IMR-90 (cell line): ENCODE measurements at regions of chr16 and their contacts with region 1.

Region 1: DNA sequence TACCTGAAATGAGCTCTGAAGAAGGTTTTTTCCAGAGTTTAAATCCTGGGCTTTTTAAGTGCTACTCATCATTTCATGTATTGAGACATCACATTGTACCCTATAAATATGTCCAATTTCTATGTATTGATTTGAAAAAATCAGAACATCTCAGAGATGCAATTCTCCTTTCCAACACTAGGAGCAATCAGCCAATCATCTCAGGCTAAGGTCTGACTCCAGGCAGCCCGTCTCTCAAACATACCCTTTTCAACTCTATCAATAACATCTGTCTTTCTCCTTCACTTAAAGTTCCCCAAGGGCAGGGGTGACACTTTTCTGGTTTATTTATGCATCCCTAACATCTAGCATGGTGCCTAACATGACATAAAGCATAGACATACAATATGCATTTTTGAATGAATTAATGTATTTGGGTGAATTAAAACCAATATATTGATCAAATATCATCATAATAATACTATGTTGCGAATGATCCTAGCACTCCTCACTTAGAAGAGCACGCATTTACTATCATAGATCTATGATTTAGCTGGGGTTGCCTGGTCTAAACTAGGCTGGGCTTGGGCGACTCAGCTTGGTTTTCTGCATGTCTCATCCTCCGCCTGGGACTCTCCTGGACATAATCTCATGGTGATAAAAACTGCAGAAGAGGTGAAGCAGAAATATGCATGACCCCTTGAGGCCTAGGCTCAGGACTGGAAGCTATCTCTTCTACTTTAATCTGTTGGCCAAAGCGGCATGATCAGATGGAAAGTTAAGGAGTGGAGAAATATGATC is 5.2 kb upstream of the CDH11 start:
- DNase-seq: no peak
- ATAC-seq: no peak
- H3K4me3 ChIP-seq: no peak overlapping the region
- H3K27ac ChIP-seq: no peak overlapping the region
- H3K4me1 ChIP-seq: peaks cover 8% of the 10 kb centered on the region
- H3K27me3 ChIP-seq: no peaks in the 10 kb centered on the region
- CTCF ChIP-seq: peak; percentile 11; the same call in 1 of the 2 replicates
- POLR2A ChIP-seq: no peak
- RAD21 ChIP-seq: no peak

Region 2: GRCh38 chr16:65054457-65054856 is 72.6 kb before region 1 on chr16:
- CTCF ChIA-PET with region 1: no interaction called
- POLR2A ChIA-PET with region 1: no interaction called
- dilution Hi-C with region 1: no loop called
- in situ Hi-C with region 1: no loop called
- intact Hi-C with region 1: no loop called
- DNase-seq: peak; percentile 31
- ATAC-seq: peak; percentile 64
- H3K4me3 ChIP-seq: no peak overlapping the region
- H3K27ac ChIP-seq: no peak overlapping the region
- H3K4me1 ChIP-seq: peaks cover 13% of the 10 kb centered on the region
- H3K27me3 ChIP-seq: no peaks in the 10 kb centered on the region
- CTCF ChIP-seq: no peak
- POLR2A ChIP-seq: no peak
- RAD21 ChIP-seq: no peak

Region 3: GRCh38 chr16:65116818-65117430 is 10.1 kb before region 1 on chr16:
- CTCF ChIA-PET with region 1: no interaction called
- POLR2A ChIA-PET with region 1: no interaction called
- dilution Hi-C with region 1: no loop called
- in situ Hi-C with region 1: no loop called
- intact Hi-C with region 1: no loop called
- DNase-seq: peak; percentile 41
- ATAC-seq: no peak
- H3K4me3 ChIP-seq: no peak overlapping the region
- H3K27ac ChIP-seq: no peak overlapping the region
- H3K4me1 ChIP-seq: peaks cover 4% of the 10 kb centered on the region
- H3K27me3 ChIP-seq: no peaks in the 10 kb centered on the region
- CTCF ChIP-seq: no peak
- POLR2A ChIP-seq: no peak
- RAD21 ChIP-seq: no peak

Region 4: DNA sequence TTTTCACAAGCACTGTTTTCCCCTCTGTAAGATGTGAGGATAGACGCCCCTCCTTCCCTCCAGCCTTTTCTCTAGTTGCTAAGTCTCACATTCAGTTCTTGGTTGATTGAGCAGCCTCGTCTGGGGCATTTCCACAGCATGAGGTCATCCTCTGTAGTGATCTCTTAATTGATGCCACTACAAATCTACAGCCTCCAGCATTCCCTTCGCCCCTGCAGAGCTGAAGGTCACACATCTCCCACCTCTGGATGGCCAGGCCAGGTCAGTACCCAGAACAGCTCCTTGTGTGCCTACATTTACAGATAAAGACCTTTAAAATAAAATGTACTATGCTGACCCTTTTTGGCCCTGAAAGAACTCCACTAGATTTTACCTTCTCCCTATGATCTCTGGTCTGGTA is 27.3 kb after region 1 on chr16:
- CTCF ChIA-PET with region 1: no interaction called
- POLR2A ChIA-PET with region 1: no interaction called
- dilution Hi-C with region 1: no loop called
- in situ Hi-C with region 1: no loop called
- intact Hi-C with region 1: loop called (anchors 1 kb)
- DNase-seq: no peak
- ATAC-seq: no peak
- H3K4me3 ChIP-seq: no peak overlapping the region
- H3K27ac ChIP-seq: no peak overlapping the region
- H3K4me1 ChIP-seq: no peaks in the 10 kb centered on the region
- H3K27me3 ChIP-seq: peaks cover 4% of the 10 kb centered on the region; the same call in 1 of the 2 replicates
- CTCF ChIP-seq: no peak
- POLR2A ChIP-seq: no peak
- RAD21 ChIP-seq: no peak

Region 5: DNA sequence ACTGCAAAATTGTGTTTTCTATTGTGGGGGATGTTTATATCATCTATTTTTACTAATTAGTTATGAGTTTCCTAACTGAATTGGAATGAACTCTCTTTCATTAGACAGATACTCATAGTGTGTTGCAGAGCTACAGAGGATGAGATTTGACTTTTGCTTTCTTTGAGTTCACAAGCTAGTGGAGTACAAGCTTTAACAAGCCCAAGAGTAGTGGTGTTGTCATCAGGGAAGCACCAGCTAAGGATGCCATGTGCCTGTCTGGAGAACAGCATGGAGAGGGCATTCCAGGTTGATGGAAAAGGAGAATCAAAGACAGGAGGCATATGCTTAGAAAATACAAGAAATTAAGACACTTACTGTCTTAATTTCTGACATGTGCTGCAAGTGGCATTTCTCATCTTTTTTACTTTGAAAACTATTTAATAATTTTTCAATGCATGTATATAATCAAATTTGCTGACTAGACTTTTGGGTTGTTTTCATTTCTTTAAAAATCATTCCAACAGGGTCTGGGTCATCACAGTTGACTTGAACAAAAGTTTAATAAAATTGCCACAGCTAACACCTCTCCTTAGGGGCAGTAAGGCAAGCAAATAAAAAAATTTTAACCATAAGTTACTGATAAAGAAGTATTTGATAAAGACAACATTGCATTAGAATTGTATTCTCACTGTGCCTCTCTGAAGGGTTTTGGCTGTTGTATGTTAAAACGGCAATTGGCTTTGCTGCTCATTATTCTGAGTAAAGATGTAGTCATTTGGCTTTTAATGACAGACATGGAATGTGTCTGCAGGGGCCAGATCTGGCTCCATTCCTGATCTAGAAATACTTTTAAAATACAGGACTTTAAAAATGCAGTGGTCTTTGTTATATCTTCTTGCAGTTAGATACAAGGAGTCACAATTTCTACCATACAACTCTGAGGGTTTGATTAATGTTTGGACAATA is 318.6 kb after region 1 on chr16:
- CTCF ChIA-PET with region 1: no interaction called
- POLR2A ChIA-PET with region 1: no interaction called
- dilution Hi-C with region 1: no loop called
- in situ Hi-C with region 1: no loop called
- intact Hi-C with region 1: no loop called
- DNase-seq: no peak
- ATAC-seq: no peak
- H3K4me3 ChIP-seq: no peak overlapping the region
- H3K27ac ChIP-seq: no peak overlapping the region
- H3K4me1 ChIP-seq: no peaks in the 10 kb centered on the region
- H3K27me3 ChIP-seq: peaks cover 5% of the 10 kb centered on the region
- CTCF ChIP-seq: no peak
- POLR2A ChIP-seq: no peak
- RAD21 ChIP-seq: no peak

Region 6: GRCh38 chr16:65463652-65464260 is 336.7 kb after region 1 on chr16:
- CTCF ChIA-PET with region 1: no interaction called
- POLR2A ChIA-PET with region 1: no interaction called
- dilution Hi-C with region 1: no loop called
- in situ Hi-C with region 1: no loop called
- intact Hi-C with region 1: loop called (anchors 5 kb)
- DNase-seq: no peak
- ATAC-seq: no peak
- H3K4me3 ChIP-seq: no peak overlapping the region
- H3K27ac ChIP-seq: no peak overlapping the region
- H3K4me1 ChIP-seq: no peaks in the 10 kb centered on the region
- H3K27me3 ChIP-seq: peaks cover 4% of the 10 kb centered on the region
- CTCF ChIP-seq: no peak
- POLR2A ChIP-seq: no peak
- RAD21 ChIP-seq: no peak